Heart right ventricle (tissue), 16 donors: ENCODE measurements at regions of chr3 and their contacts with region 1.

Region 1: DNA sequence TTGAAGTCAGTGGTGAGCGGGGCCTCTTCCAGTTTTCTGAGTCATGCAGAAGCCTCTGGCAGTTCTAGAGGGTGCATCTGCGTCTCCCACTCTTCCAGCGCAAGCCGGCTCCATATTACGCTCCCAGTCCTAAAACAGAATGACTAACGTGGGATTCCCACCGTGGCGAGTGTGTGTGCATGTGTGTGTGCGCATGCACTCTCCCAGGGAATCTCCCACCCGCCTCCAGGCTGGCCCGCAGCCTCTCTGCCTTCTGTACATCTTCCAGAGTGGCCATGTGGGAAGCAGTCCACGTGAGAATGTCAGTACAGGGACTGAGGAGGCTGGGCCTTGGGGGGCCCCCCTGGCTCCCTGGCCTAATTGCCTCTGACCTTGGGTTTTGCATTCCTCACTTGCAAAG is 87.7 kb downstream of the LSM3 start:
- DNase-seq: peak in 1 of 2 donors; percentile 53
- ATAC-seq: peak in 7 of 8 donors; percentile 70 to 86 (median 78)
- H3K4me3 ChIP-seq: no peak overlapping the region
- H3K27ac ChIP-seq: no peak overlapping the region
- H3K4me1 ChIP-seq: peaks cover 0 to 5% (median 2%) of the 10 kb centered on the region in 9 donors
- H3K27me3 ChIP-seq: peaks cover 0 to 50% (median 15%) of the 10 kb centered on the region in 7 donors
- CTCF ChIP-seq: no peak

Region 2: DNA sequence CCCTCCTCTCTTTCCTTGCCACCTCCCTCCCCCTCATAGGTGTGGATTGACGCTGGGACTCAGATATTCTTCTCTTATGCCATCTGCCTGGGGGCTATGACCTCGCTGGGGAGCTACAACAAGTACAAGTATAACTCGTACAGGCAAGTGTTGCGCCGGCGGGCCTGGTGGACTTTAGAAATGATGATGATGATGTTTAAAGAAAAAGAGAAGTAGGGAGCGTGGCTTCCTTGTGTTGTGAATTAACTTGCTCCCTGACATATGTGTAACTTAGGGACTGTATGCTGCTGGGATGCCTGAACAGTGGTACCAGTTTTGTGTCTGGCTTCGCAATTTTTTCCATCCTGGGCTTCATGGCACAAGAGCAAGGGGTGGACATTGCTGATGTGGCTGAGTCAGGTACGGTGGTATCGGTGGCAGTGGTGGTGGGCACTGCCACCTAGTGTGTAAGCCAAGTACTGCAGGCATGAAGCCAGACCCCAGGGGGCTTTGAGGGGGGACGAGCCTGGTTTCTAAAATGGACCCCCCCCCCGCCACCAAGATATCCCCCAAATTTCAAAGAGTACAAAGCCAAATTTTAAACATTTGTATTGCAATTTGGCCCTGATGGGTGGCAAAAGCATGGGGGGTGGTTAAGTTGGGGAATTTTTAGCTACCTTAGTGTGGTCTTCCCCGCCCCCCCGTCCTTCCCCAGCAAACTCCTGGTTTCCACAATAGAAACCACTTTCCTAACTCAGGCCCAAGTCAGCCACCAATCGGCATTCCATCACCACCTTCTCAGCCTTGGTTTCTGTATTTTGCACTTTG is 201.7 kb after region 1 on chr3:
- intact Hi-C with region 1: loop called in 9 of 10 experiments (anchors 1 to 5 kb)
- DNase-seq: peak in 1 of 2 donors; percentile 40
- ATAC-seq: peak in 7 of 8 donors; percentile 44 to 78 (median 57)
- H3K4me3 ChIP-seq: no peak overlapping the region
- H3K27ac ChIP-seq: no peak overlapping the region
- H3K4me1 ChIP-seq: peaks cover 0 to 26% (median 2%) of the 10 kb centered on the region in 9 donors
- H3K27me3 ChIP-seq: peaks cover 0 to 28% (median 0%) of the 10 kb centered on the region in 7 donors
- CTCF ChIP-seq: peak; percentile 84 to 93 (median 88)